Activated CD4-positive, alpha-beta memory T cell treated with anti-CD3 and anti-CD28 coated beads, Interleukin-2, amount 10 ng/mL, durations not matched to agents 7 days and 5 days (primary cell): ENCODE measurements at regions of chr14 and their contacts with region 1.

Region 1: DNA sequence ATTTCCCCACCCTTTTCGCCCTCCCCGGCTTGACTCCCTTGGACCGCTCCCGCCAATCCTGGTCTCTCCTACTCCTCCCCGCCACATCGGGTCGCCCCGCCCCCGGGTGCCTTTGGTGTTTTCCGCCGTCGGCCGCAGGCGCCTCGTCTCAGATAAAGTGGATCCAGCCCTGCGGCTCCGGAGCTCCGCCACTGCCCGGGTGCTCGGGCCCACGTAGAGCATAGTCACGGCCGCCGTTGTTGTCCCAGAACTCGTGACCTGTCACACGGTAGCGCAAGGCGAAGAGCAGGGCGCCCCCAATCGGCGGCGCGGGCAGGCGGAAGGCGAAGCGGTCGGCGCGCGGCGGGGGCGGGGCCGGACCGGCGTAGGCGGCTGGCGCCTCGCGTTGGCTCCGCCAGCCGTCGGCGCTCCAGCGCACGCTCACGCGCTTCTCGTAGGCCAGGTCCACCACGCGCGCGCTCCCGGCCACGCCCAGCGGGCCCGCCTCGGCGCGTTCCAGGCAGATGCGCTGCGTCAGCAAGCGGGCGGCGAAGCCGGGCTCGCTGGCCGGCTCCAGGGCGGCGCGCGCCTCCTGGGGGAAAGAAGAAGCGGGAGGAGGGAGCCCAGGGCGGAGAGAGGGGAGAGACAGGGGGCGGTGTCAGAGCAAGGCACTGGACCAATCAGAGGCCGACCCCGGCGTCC is 1.2 kb downstream of the PPP1R3E start:
- DNase-seq: peak; percentile 98
- H3K4me3 Mint-ChIP-seq: peak overlapping the region; percentile 93
- H3K27ac Mint-ChIP-seq: peak overlapping the region; percentile 95
- H3K4me1 Mint-ChIP-seq: peaks cover 31% of the 10 kb centered on the region
- H3K27me3 Mint-ChIP-seq: peaks cover 8% of the 10 kb centered on the region

Region 2: DNA sequence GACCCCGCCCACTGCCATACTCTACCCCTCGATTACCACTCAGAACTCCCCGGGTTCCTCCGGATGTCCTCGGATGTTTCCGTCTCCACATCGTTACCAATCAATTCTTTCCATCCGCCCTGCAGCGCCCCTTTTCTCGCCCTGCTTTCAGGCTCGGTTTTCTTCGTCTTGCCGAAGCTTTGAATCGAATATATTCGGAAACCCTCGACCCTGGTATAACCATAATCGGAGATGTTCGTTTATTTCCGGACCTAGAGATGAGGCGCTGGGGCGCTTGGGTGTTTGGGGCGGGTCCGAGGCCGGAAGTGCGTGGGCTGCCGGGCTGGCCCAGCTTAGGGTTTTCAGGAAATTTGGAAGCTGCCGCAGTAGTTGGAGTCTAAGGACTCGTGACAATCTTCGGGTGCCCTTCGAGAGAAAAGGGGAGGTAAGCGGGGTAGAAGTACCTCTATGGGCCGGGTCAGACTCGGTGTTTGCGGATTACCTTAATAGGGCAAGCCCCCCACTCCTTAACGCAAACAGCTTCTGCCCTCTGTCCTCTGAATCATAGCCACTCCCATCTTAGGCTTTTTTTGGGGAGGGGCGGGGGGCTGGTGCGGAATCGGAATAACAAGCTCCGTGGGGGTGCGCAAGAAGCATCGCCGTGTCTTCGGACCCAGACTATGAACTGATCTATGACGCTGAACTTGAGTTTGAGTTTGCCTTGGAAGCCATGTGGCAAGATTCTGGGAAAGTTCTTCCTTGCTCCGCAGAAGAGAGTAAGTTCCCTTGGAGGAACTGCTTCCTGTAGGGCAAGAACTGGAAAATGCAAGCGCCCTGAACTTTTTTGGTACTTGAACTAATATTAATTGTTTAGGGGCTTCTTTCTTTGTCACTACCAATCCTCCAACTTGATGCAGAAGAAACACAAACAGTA is 206.0 kb before region 1 on chr14 and contains the start of gene C14orf119:
- CTCF ChIA-PET with region 1: interaction called, 6 read pairs
- POLR2A ChIA-PET with region 1: interaction called, 14 read pairs
- DNase-seq: peak; percentile 100
- H3K4me3 Mint-ChIP-seq: no peak within 1 kb of the TSS
- H3K27ac Mint-ChIP-seq: no peak within 1 kb of the TSS
- H3K4me1 Mint-ChIP-seq: peaks cover 36% of the 10 kb centered on the region
- H3K27me3 Mint-ChIP-seq: no peaks in the 10 kb centered on the region
- total RNA-seq, gene C14orf119: 49.2 to 55.5 TPM

Region 3: GRCh38 chr14:23237772-23238594 is 63.4 kb before region 1 on chr14 and contains the start of gene RNF212B:
- CTCF ChIA-PET with region 1: no interaction called
- POLR2A ChIA-PET with region 1: no interaction called
- DNase-seq: peak; percentile 82
- H3K4me3 Mint-ChIP-seq: no peak within 1 kb of the TSS
- H3K27ac Mint-ChIP-seq: no peak within 1 kb of the TSS
- H3K4me1 Mint-ChIP-seq: peaks cover 6% of the 10 kb centered on the region
- H3K27me3 Mint-ChIP-seq: peaks cover 9% of the 10 kb centered on the region
- total RNA-seq, gene RNF212B: not detected

Region 4: DNA sequence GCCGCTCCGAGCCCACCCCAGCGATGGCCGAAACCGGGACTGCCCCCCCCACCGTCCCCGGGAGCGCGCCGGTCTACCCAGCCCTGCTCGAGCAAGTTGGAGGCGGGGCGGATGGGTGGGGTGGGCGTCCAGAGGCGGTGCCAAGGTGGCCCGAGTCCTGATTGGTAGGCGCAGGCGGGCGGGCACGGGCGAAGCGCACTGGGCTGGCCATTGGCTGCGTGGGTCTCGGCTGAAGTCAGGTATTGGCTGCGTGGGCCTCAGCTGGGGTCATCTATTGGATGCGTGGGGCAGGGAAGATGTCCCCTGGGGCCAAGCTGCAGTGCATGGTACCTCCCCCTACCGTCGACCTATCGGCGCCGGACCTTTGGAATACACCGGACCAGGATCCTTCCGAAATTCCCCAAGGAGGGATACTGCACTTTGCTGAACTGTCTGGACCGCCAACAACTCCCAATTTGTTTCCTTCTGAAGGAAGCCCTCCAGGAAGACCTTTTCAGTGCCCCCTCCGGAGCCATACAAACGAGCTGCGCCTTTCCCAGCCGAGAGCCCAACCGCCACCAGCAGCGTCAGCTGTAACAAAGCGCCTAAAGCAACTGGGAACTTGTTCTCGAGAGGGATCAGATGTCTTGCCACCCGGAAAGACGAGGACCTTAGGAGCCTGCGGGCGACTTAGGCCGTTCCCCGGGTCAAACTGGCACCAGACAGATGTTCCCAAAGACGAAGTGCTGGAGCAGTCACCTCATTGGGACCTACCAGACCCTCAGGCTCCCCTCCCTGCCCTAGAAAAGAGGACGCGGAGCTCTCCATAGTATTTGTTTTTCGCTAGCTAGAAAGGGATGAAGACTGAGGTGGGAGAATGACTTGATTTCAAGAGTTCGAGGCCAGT is 15.2 kb before region 1 on chr14 and contains the start of gene HOMEZ:
- CTCF ChIA-PET with region 1: interaction called, 78 read pairs
- POLR2A ChIA-PET with region 1: interaction called, 62 read pairs
- DNase-seq: peak; percentile 98
- H3K4me3 Mint-ChIP-seq: peak within 1 kb of the TSS; percentile 89
- H3K27ac Mint-ChIP-seq: peak within 1 kb of the TSS; percentile 84
- H3K4me1 Mint-ChIP-seq: peaks cover 28% of the 10 kb centered on the region
- H3K27me3 Mint-ChIP-seq: no peaks in the 10 kb centered on the region
- total RNA-seq, gene HOMEZ: 11.7 to 11.9 TPM

Region 5: DNA sequence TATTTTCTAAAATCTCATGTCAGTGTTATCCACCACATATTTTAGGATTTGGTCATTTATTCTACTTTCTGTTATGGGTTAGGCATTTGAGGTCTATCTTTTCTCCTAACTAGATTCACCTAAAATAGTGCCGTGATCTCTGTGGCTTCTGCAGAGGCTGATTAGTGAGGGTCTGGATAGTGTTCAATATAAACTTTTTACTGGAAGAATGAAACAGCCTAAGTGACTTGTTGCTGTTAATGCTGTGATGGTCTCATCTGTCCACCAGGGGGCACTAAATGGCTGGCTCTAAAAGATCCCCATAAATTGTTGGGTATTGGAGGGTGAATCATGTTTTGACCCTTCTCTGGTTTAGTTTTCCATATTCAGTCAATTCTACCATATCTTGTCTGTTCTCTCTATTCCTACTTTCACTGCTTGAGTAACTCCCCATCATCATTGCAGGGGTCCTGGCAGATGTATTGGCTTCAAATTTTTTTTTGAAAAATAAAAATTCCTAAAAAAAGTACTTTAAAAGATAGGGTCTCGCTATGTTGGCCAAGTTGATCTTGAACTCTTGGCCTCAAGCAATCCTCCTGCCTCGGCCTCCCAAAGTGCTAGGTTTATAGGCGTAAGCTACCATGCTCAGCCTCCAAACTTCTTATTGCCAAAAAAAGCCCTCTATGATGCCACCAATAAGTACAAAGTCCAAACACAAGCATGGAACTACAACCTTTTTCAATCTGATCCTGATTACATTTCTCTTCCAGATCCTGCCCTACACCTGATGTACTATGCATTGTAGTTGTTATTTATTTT is 26.7 kb after region 1 on chr14:
- CTCF ChIA-PET with region 1: interaction called, 36 read pairs
- POLR2A ChIA-PET with region 1: interaction called, 282 read pairs
- DNase-seq: peak; percentile 67
- H3K4me3 Mint-ChIP-seq: no peak overlapping the region
- H3K27ac Mint-ChIP-seq: no peak overlapping the region
- H3K4me1 Mint-ChIP-seq: peaks cover 8% of the 10 kb centered on the region
- H3K27me3 Mint-ChIP-seq: no peaks in the 10 kb centered on the region

Region 6: GRCh38 chr14:23352511-23353432 is 51.3 kb after region 1 on chr14 and contains the start of gene SLC22A17:
- CTCF ChIA-PET with region 1: no interaction called
- POLR2A ChIA-PET with region 1: no interaction called
- DNase-seq: peak; percentile 46
- H3K4me3 Mint-ChIP-seq: peak within 1 kb of the TSS; percentile 47
- H3K27ac Mint-ChIP-seq: no peak within 1 kb of the TSS
- H3K4me1 Mint-ChIP-seq: peaks cover 11% of the 10 kb centered on the region
- H3K27me3 Mint-ChIP-seq: peaks cover 51% of the 10 kb centered on the region
- total RNA-seq, gene SLC22A17: 2.0 TPM